Activated T-helper 2 cell treated with anti-CD3 and anti-CD28 coated beads, Interferon-gamma antibody, Interleukin-2, Interleukin-4, amounts not matched to agents 10 μg/mL and 5 μg/mL and 100 μg/mL, durations not matched to agents 14 hours and 24 hours and 36 hours (primary cell): ENCODE measurements at regions of chr2 and their contacts with region 1.

Region 1: GRCh38 chr2:113138428-113139322 is 11.3 kb downstream of the IL1RN start:
- DNase-seq: peak; percentile 50
- H3K4me3 Mint-ChIP-seq: no peak overlapping the region
- H3K27ac Mint-ChIP-seq: no peak overlapping the region
- H3K4me1 Mint-ChIP-seq: peaks cover 35% of the 10 kb centered on the region
- H3K27me3 Mint-ChIP-seq: peaks cover 3% of the 10 kb centered on the region

Region 2: GRCh38 chr2:113157118-113157896 is 18.6 kb after region 1 on chr2:
- intact Hi-C with region 1: loop called (anchors 2 kb)
- DNase-seq: no peak
- H3K4me3 Mint-ChIP-seq: peak overlapping the region; percentile 84
- H3K27ac Mint-ChIP-seq: peak overlapping the region; percentile 38
- H3K4me1 Mint-ChIP-seq: peaks cover 19% of the 10 kb centered on the region
- H3K27me3 Mint-ChIP-seq: peaks cover 12% of the 10 kb centered on the region

Region 3: GRCh38 chr2:113167115-113167932 is 28.6 kb after region 1 on chr2:
- intact Hi-C with region 1: no loop called
- DNase-seq: no peak
- H3K4me3 Mint-ChIP-seq: peak overlapping the region; percentile 59
- H3K27ac Mint-ChIP-seq: peak overlapping the region; percentile 94
- H3K4me1 Mint-ChIP-seq: peaks cover 59% of the 10 kb centered on the region
- H3K27me3 Mint-ChIP-seq: no peaks in the 10 kb centered on the region

Region 4: DNA sequence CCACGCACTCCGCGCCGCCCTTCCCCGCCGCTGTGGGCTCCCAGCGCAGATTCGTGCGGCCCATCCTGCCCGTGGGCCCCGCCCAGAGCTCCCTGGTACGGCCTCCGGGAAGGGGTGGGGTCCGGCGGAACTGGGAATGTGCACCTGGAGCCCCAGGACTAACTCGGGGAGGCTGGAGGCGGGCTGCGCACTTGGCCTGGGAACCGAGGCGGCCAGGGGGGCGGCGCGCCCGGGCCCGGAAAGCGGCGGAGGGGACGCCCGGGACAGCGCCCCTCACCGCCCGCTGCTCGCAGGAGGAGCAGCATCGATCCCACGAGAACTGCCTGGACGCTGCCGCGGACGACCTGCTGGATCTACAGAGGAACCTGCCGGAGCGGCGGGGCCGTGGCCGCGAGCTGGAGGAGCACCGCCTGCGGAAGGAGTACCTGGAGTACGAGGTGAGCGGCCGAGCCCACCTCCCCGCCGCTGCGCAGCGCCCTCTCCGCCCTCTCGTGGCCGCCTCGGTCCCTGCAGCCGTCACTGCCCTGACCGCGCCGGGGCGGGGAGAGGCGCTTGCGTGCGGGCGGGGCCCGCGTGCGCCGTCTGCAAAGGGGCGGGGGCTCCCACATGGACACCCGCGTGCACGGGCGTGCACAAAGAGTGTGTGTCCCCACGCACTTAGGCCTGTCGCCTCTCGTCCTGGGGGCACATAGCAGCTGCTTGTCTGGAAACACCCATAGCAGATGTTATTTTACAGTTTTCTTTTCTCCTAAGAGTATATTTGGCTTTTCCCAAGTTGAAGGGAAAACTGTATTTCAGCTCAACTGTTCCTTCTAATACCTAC is 60.3 kb after region 1 on chr2:
- intact Hi-C with region 1: loop called (anchors 1 kb)
- DNase-seq: peak; percentile 70
- H3K4me3 Mint-ChIP-seq: no peak overlapping the region
- H3K27ac Mint-ChIP-seq: no peak overlapping the region
- H3K4me1 Mint-ChIP-seq: peaks cover 29% of the 10 kb centered on the region
- H3K27me3 Mint-ChIP-seq: no peaks in the 10 kb centered on the region

Region 5: DNA sequence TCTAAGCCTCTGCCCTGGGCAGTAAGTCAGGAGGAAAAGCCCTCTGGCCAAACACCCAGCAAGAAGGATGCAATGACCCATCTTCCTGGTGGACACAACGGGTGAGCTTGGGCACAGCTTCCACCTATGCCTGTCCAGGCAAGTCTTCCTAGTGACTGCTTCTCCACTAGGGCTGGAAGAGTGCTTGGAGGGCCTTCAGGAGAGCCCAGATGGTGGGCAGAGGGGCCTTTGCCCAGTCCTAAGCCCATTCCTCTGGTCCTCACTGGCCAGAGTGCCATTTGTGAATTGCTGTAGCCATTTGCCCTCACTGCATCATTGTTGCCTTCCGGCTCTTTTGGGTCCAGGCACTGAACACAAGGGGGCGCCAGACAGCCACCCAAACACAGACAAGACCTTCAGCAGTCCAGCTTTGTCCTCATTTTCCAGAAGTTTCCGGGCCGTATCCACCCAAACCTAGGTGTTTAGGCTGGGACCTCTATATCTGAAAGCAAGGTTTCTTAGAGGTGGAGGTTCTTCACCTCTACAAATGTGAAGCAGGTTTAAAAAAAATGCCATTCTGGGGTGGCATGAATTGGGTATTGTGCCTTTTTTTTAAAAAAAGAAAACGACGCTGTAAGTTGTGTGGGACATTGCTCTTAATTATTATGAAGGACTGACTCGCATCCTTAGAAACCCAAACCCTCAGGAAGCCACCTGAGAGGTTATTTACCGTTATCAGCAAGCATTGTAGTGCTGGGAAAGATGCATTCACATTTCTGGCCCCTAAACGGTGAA is 110.5 kb after region 1 on chr2:
- intact Hi-C with region 1: no loop called
- DNase-seq: peak; percentile 66
- H3K4me3 Mint-ChIP-seq: no peak overlapping the region
- H3K27ac Mint-ChIP-seq: peak overlapping the region; percentile 11
- H3K4me1 Mint-ChIP-seq: peaks cover 41% of the 10 kb centered on the region
- H3K27me3 Mint-ChIP-seq: no peaks in the 10 kb centered on the region

Region 6: DNA sequence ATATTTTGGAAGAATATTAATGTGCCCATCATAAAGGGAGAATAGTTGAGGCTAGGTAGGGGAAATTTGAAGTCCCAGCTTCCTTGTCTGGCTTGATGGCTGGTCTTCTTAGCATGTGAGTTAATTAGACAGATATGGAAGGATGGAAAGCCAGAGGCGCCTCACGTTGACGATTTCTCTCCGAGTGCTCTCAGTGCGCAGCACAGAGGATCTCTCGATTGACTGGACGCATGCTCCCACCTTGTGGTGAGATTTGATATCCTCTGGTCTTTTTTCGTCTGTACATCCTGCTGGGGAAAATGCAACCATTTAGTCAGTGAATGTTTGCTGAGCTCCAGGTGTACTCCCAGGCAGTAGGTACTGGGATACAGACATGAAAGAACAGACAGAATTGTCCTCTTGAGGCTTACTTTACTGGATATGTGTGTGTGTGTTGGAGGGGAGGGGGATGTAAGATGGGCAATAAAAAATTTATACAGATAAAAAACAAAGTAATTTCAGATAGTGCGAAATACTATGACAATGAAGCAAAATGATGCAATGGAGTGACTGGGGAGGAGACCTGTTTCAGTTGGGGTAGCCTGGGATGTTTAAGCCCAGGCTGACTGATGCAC is 231.9 kb after region 1 on chr2:
- intact Hi-C with region 1: loop called (anchors 5 kb)
- DNase-seq: peak; percentile 52
- H3K4me3 Mint-ChIP-seq: no peak overlapping the region
- H3K27ac Mint-ChIP-seq: no peak overlapping the region
- H3K4me1 Mint-ChIP-seq: peaks cover 12% of the 10 kb centered on the region
- H3K27me3 Mint-ChIP-seq: peaks cover 13% of the 10 kb centered on the region